ENCODE measurements at regions of chr20 and their contacts with region 1.

Region 1: GRCh38 chr20:35146920-35147574 is at the start of gene EDEM2:
- DNase-seq: peak; percentile 88 to 96 (median 92)
- ATAC-seq: peak; percentile 90 to 91
- H3K4me3 Mint-ChIP-seq: peak within 1 kb of the TSS; percentile 91 to 99 (median 96)
- H3K27ac Mint-ChIP-seq: peak within 1 kb of the TSS; percentile 91 to 98 (median 95)
- H3K4me1 Mint-ChIP-seq: peaks cover 11 to 47% (median 36%) of the 10 kb centered on the region in 4 donors
- H3K27me3 Mint-ChIP-seq: no peaks in the 10 kb centered on the region
- polyA plus RNA-seq, gene EDEM2: 35.2 to 38.2 (median 37.6) TPM

Region 2: GRCh38 chr20:35092524-35093266 is 54.4 kb before region 1 on chr20 and contains the start of gene TRPC4AP:
- POLR2A ChIA-PET with region 1: interaction called, 10 read pairs
- DNase-seq: peak; percentile 81 to 91 (median 86)
- ATAC-seq: peak; percentile 95 to 96
- H3K4me3 Mint-ChIP-seq: peak within 1 kb of the TSS; percentile 85 to 96 (median 92)
- H3K27ac Mint-ChIP-seq: peak within 1 kb of the TSS; percentile 78 to 98 (median 95)
- H3K4me1 Mint-ChIP-seq: peaks cover 24 to 54% (median 47%) of the 10 kb centered on the region in 4 donors
- H3K27me3 Mint-ChIP-seq: no peaks in the 10 kb centered on the region
- polyA plus RNA-seq, gene TRPC4AP: 54.7 to 57.8 (median 56.5) TPM

Region 3: GRCh38 chr20:35166242-35166830 is 19.3 kb after region 1 on chr20:
- POLR2A ChIA-PET with region 1: interaction called, 62 read pairs
- DNase-seq: no peak
- ATAC-seq: no peak
- H3K4me3 Mint-ChIP-seq: peak overlapping the region in 1 of 10 donors; percentile 5
- H3K27ac Mint-ChIP-seq: peak overlapping the region in 3 of 10 donors; percentile 44 to 78 (median 68)
- H3K4me1 Mint-ChIP-seq: peaks cover 13 to 26% (median 22%) of the 10 kb centered on the region in 4 donors
- H3K27me3 Mint-ChIP-seq: no peaks in the 10 kb centered on the region

Region 4: GRCh38 chr20:35181731-35182130 is 34.7 kb after region 1 on chr20:
- POLR2A ChIA-PET with region 1: no interaction called
- DNase-seq: no peak
- ATAC-seq: no peak
- H3K4me3 Mint-ChIP-seq: no peak overlapping the region
- H3K27ac Mint-ChIP-seq: no peak overlapping the region
- H3K4me1 Mint-ChIP-seq: peaks cover 0 to 3% (median 0%) of the 10 kb centered on the region in 4 donors
- H3K27me3 Mint-ChIP-seq: no peaks in the 10 kb centered on the region

Region 5: GRCh38 chr20:35200255-35200654 is 53.2 kb after region 1 on chr20:
- POLR2A ChIA-PET with region 1: interaction called, 13 read pairs
- DNase-seq: no peak
- ATAC-seq: no peak
- H3K4me3 Mint-ChIP-seq: no peak overlapping the region
- H3K27ac Mint-ChIP-seq: no peak overlapping the region
- H3K4me1 Mint-ChIP-seq: no peaks in the 10 kb centered on the region
- H3K27me3 Mint-ChIP-seq: no peaks in the 10 kb centered on the region

Region 6: GRCh38 chr20:35207950-35208611 is 61.0 kb after region 1 on chr20:
- POLR2A ChIA-PET with region 1: interaction called, 20 read pairs
- DNase-seq: peak; percentile 50 to 90 (median 74)
- ATAC-seq: peak; percentile 87 to 96
- H3K4me3 Mint-ChIP-seq: no peak overlapping the region
- H3K27ac Mint-ChIP-seq: no peak overlapping the region
- H3K4me1 Mint-ChIP-seq: no peaks in the 10 kb centered on the region
- H3K27me3 Mint-ChIP-seq: no peaks in the 10 kb centered on the region

Region 7: DNA sequence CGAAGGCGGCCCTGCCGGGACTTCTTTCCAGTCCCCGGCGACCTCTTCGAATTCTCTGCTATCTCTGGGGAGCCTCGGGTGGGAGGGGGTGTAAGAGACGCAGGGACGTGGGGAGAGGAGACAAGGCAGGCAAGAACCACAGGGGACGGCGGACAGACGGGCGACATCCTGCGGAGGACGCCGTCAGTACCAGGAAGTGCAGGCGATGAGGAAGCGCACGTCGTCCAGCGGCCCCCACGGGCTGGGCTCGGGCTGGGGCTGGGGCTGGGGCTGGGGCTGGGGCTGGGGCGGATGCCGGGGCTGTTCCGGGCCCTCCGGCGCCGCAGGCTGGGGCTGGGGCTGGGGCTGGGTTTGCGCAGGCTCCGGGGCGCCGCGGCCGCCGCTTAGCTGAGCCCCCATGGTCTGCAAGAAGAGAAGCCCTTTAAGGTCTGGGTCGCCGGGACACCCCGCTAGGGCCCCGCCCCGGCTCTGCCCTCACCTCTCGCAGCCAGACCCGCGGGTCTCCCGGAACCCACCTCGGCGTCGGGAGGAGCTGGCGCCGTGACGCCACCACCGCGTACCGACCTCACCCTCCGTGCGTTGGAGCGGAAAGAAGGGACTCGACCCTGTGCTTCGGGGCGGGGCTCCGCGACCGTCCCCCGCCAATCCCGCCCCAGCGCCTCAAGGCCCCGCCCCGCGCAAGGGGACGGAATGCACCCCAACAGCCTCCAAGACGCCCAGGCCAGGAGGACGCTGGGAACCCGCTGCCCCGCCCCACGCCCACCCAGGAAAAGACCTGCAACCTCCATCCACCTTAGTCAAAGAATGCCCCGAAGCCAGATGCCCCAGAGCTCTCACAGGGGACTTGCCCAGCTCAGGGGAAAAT is 130.7 kb after region 1 on chr20 and contains the start of gene MMP24OS:
- POLR2A ChIA-PET with region 1: interaction called, 10 read pairs
- DNase-seq: peak; percentile 80 to 94 (median 88)
- ATAC-seq: peak; percentile 87 to 88
- H3K4me3 Mint-ChIP-seq: peak within 1 kb of the TSS; percentile 93 to 99 (median 97)
- H3K27ac Mint-ChIP-seq: peak within 1 kb of the TSS; percentile 95 to 100 (median 99)
- H3K4me1 Mint-ChIP-seq: peaks cover 15 to 53% (median 32%) of the 10 kb centered on the region in 4 donors
- H3K27me3 Mint-ChIP-seq: no peaks in the 10 kb centered on the region
- polyA plus RNA-seq, gene MMP24OS: 7.6 to 12.3 (median 9.0) TPM

Measured in naive thymus-derived CD8-positive, alpha-beta T cell (primary cell).